ENCODE measurements at regions of chr22 and their contacts with region 1.

Region 1: DNA sequence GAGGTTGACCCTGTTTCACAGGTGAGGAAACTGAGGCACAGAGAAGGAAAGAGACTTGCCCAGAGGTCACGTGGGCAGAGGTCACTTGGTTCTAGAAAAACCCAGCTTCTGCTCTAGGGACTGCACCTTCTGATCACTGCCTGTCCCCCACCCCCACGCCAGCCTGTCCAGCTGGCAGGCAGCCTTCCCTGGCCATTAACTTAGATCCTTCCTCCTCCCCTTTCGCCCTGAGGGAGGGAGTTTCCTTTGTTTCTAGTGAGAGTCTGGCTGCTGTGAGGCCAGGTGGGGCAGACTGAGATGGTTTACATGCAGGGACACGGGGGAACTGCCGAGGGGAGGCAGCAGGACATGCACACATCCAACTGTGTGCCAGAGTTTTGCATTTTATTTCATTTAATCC is 3.2 kb downstream of the FAM83F start:
- DNase-seq: peak; percentile 93
- H3K4me3 ChIP-seq: peak overlapping the region; percentile 4 to 90 (median 6)
- H3K27ac ChIP-seq: peak overlapping the region; percentile 60
- H3K4me1 ChIP-seq: peaks cover 71% of the 10 kb centered on the region
- H3K27me3 ChIP-seq: no peaks in the 10 kb centered on the region
- CTCF ChIP-seq: no peak

Region 2: GRCh38 chr22:39808081-39808480 is 189.9 kb before region 1 on chr22:
- CTCF ChIA-PET with region 1: no interaction called
- dilution Hi-C with region 1: no loop called
- in situ Hi-C with region 1: no loop called
- intact Hi-C with region 1: no loop called
- DNase-seq: no peak
- H3K4me3 ChIP-seq: no peak overlapping the region
- H3K27ac ChIP-seq: no peak overlapping the region
- H3K4me1 ChIP-seq: no peaks in the 10 kb centered on the region
- H3K27me3 ChIP-seq: no peaks in the 10 kb centered on the region
- CTCF ChIP-seq: peak; percentile 41 to 51

Region 3: DNA sequence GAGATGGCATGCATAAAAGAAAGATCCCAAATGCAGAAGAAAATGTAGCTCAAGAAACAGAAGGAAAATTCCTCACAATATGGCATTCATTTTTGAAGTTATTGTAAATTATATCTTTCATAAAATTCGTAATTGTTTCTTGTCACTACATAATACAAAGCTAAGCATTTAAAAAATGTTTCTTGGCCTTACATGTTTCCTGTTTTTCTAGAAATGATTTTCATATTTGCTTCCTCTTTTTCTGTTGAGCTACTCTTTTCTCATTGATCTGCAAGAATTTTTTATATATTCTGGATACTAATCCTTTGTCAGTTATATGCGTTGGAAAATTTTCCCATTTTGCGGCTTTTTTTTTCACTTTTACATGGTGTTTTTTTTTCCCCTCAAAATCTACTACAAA is 152.4 kb before region 1 on chr22:
- CTCF ChIA-PET with region 1: no interaction called
- dilution Hi-C with region 1: no loop called
- in situ Hi-C with region 1: no loop called
- intact Hi-C with region 1: no loop called
- DNase-seq: no peak
- H3K4me3 ChIP-seq: no peak overlapping the region
- H3K27ac ChIP-seq: no peak overlapping the region
- H3K4me1 ChIP-seq: no peaks in the 10 kb centered on the region
- H3K27me3 ChIP-seq: peaks cover 2% of the 10 kb centered on the region
- CTCF ChIP-seq: no peak

Region 4: DNA sequence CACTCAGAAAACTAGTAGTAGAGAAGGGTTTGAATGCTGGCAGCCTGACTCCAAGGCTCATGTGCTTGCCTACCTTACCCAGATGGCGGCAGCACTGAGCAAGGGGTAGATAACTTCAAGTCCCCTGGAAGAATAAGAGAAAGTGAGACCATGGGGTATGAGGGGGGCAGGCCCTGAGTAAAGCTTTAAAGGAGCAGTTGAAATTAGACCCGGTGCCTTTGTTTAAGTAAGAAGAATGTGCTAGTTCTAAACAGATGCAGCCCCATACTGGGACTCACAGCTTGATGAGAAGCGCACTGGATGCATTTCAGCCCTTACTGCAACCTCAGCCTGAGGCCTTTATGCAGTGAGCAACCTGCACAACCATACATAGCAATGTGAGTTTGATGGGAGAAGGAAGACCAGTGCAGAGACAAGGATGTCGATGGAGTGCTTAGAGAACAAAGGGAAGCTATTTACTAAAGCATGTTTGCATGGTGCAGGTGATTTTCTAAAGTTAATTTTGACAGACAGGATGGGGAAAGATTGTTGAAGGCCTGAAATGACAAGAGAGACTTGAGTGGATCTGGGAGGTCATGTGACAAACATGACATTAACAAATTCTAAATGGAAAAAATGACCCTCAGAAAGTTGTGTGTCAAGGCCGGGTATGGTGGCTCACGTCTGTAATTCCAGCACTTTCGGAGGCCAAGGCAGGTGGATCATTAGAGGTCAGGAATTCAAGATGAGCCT is 64.9 kb before region 1 on chr22:
- CTCF ChIA-PET with region 1: interaction called, 3 read pairs
- dilution Hi-C with region 1: no loop called
- in situ Hi-C with region 1: no loop called
- intact Hi-C with region 1: loop called (anchors 5 kb)
- DNase-seq: no peak
- H3K4me3 ChIP-seq: no peak overlapping the region
- H3K27ac ChIP-seq: no peak overlapping the region
- H3K4me1 ChIP-seq: peaks cover 14% of the 10 kb centered on the region
- H3K27me3 ChIP-seq: no peaks in the 10 kb centered on the region
- CTCF ChIP-seq: peak; percentile 66 to 75

Region 5: DNA sequence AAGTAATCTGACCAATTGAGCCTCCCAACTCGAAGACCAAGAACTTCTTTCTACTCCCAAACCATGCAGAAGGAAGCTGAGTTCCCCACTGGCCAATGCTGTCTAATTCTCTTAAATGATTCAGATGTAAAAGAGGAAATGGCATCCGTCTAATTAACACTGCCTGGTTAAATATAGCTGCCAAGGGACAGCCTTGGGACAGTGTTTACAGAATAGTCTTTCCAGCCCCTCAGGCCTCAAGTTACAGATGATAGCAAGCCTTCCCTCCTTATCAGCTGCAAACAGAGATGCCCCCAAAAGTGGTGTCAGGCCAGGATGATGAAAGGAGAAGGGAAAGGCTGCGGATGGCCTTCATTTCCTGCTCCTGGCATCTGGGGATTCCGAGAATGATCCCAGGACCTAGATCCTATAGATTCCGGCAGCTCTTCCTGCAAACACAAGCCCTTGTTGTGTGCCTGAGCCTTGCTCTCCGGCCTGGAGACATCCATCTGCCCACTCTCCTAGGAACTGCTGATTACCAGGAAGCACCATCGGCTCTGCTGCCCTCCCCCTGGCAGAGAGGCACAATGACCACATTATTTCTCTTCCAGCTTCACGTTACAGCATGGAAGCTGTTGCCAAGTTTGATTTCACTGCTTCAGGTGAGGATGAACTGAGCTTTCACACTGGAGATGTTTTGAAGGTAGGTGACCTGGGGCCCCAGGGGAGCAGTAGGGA is 51.3 kb before region 1 on chr22:
- CTCF ChIA-PET with region 1: no interaction called
- dilution Hi-C with region 1: no loop called
- in situ Hi-C with region 1: no loop called
- intact Hi-C with region 1: loop called (anchors 5 kb)
- DNase-seq: peak; percentile 46
- H3K4me3 ChIP-seq: no peak overlapping the region
- H3K27ac ChIP-seq: no peak overlapping the region
- H3K4me1 ChIP-seq: peaks cover 13% of the 10 kb centered on the region
- H3K27me3 ChIP-seq: no peaks in the 10 kb centered on the region
- CTCF ChIP-seq: no peak

Region 6: DNA sequence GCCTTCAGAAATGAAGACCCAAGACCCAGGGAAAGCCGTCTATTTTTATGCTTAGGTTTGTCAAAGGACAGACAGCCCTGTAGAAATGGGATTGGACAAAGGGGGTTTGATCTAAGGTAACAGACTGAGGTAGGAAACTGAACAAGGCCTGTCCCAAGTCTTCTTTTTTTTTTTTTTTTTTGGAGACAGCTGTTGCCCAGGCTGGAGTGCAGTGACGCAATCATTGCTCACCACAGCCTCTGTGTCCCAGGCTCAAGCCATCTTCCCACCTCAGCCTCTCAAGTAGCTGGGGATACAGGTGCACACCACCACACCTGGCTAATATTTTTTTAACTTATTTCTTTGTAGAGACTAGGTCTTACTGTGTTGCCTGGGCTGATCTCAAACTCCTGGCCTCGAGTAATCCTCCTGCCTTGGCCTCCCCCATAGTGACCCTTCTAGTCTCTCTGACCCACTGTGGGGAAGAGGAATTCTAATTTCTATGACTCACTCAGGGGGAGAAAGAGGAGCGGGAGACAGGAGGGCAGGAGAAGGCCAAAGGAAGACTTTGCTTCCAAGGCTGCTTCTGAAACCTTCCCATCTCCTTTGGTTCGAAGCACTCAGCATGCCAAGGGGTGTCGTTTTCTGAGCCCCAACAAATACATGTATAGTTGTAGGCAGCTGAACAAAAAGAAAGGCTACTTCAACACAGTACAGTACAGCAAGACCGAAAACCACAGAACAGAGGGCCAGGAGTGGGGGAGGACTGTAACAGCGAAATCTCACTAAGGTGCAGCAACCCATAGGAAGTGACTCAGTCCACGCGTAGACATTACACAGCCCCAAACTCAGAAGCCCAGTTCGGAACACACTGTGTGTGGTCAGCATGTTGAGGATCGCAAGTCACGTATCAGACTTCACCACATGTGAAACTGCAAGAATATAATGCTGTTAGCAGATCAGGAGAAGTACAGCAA is 36.9 kb before region 1 on chr22:
- CTCF ChIA-PET with region 1: no interaction called
- dilution Hi-C with region 1: loop called (anchors 5 kb)
- in situ Hi-C with region 1: no loop called
- intact Hi-C with region 1: loop called (anchors 5 kb)
- DNase-seq: peak; percentile 93
- H3K4me3 ChIP-seq: no peak overlapping the region
- H3K27ac ChIP-seq: peak overlapping the region; percentile 84
- H3K4me1 ChIP-seq: peaks cover 33% of the 10 kb centered on the region
- H3K27me3 ChIP-seq: no peaks in the 10 kb centered on the region
- CTCF ChIP-seq: no peak

Region 7: GRCh38 chr22:40009292-40009769 is 11.4 kb after region 1 on chr22:
- CTCF ChIA-PET with region 1: no interaction called
- dilution Hi-C with region 1: no loop called
- in situ Hi-C with region 1: no loop called
- intact Hi-C with region 1: loop called (anchors 1 kb)
- DNase-seq: peak; percentile 70
- H3K4me3 ChIP-seq: no peak overlapping the region
- H3K27ac ChIP-seq: peak overlapping the region; percentile 60
- H3K4me1 ChIP-seq: peaks cover 59% of the 10 kb centered on the region
- H3K27me3 ChIP-seq: no peaks in the 10 kb centered on the region
- CTCF ChIP-seq: no peak

Region 8: DNA sequence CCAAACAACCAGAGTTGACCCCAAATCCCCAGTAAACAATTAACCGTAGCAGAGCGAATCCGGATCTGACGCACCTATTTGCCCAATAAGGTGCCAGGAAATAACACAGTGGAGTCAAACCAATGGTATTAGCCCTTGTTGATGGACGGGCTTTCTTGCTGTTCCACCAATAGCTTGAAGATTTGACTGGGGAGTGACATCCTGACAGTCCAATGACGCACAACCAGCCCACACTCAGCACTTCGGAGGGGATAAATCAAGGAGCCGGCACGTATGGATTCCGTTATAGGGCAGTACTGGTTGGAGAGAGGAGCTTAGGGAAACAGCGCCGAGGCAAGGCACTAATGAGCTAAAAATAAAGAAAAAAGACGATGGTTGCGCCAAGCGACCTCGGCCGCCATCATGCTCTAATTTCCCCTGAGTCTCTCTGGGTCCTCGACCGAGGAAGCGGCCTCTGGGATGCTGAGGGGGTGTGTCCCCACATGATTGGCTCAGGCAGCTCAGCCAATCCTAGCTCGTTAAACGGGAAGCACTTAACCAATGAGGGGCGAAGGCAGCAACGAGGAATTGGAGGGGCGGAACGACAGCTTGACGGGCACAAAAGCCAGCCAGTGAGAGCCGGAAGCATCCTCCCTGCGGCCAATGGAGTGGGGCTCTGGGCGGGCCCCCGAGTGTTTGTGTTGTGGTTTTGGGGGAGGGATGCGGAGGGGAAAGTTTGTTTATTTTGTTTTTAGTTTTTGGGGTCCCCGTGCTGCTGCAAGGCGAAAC is 46.3 kb after region 1 on chr22:
- CTCF ChIA-PET with region 1: no interaction called
- dilution Hi-C with region 1: no loop called
- in situ Hi-C with region 1: no loop called
- intact Hi-C with region 1: no loop called
- DNase-seq: peak; percentile 99
- H3K4me3 ChIP-seq: peak overlapping the region; percentile 78 to 97 (median 90)
- H3K27ac ChIP-seq: peak overlapping the region; percentile 80
- H3K4me1 ChIP-seq: peaks cover 44% of the 10 kb centered on the region
- H3K27me3 ChIP-seq: no peaks in the 10 kb centered on the region
- CTCF ChIP-seq: no peak